Activated CD8-positive, alpha-beta memory T cell treated with anti-CD3 and anti-CD28 coated beads, Interleukin-2, amount 10 ng/mL, durations not matched to agents 7 days and 5 days (primary cell): ENCODE measurements at regions of chr17 and their contacts with region 1.

Region 1: GRCh38 chr17:38735161-38735997 is 5.2 kb downstream of the CISD3 start:
- DNase-seq: peak; percentile 77
- ATAC-seq: peak; percentile 18
- H3K4me3 Mint-ChIP-seq: no peak overlapping the region
- H3K27ac Mint-ChIP-seq: no peak overlapping the region
- H3K4me1 Mint-ChIP-seq: peaks cover 39% of the 10 kb centered on the region
- H3K27me3 Mint-ChIP-seq: no peaks in the 10 kb centered on the region

Region 2: GRCh38 chr17:38667099-38667786 is 68.1 kb before region 1 on chr17:
- CTCF ChIA-PET with region 1: interaction called, 232 read pairs
- DNase-seq: peak; percentile 77
- ATAC-seq: peak; percentile 76
- H3K4me3 Mint-ChIP-seq: no peak overlapping the region
- H3K27ac Mint-ChIP-seq: no peak overlapping the region
- H3K4me1 Mint-ChIP-seq: peaks cover 5% of the 10 kb centered on the region
- H3K27me3 Mint-ChIP-seq: peaks cover 61% of the 10 kb centered on the region

Region 3: GRCh38 chr17:38702166-38702899 is 33.0 kb before region 1 on chr17:
- CTCF ChIA-PET with region 1: interaction called, 29 read pairs
- DNase-seq: peak; percentile 89
- ATAC-seq: peak; percentile 54
- H3K4me3 Mint-ChIP-seq: peak overlapping the region; percentile 90
- H3K27ac Mint-ChIP-seq: peak overlapping the region; percentile 99
- H3K4me1 Mint-ChIP-seq: peaks cover 40% of the 10 kb centered on the region
- H3K27me3 Mint-ChIP-seq: no peaks in the 10 kb centered on the region

Region 4: GRCh38 chr17:38719289-38719942 is 16.0 kb before region 1 on chr17:
- CTCF ChIA-PET with region 1: interaction called, 17 read pairs
- DNase-seq: no peak
- ATAC-seq: no peak
- H3K4me3 Mint-ChIP-seq: no peak overlapping the region
- H3K27ac Mint-ChIP-seq: no peak overlapping the region
- H3K4me1 Mint-ChIP-seq: peaks cover 13% of the 10 kb centered on the region
- H3K27me3 Mint-ChIP-seq: no peaks in the 10 kb centered on the region

Region 5: DNA sequence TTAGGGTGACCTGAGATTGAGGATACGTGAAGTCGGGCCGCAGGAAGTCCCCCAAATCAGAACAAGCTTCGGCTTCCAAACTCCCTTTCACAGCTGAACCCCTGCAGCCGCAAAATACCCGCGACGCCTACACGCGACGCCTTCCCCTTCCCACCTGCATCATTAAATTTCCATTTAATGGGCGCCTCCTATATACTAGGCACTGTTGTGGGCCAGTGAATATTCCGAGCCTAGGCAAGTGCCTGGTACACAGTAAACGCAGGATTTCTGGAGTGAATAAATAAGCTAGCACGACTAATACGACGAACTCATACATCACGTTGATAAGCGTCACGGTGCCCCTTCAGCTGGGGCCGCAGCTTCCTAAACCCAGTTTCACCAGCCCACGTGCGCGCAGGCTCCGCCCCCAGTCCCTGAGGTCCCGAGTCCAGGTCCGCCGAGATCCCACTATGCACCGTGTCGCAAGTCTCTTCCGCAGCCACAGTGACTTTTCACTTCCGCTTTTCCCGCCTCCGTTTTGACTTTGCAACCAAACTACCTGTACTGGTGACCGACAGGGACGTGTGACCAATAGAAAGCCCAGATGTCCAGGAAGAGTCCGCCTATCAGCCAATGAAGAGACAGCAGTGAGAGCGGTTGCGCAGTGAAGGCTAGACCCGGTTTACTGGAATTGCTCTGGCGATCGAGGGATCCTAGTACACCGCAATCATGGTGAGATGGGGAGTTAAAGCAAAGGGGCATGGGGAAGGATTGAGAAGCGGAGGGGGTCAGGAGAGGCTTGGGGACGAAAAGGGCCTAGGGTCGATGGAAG is 16.9 kb after region 1 on chr17 and contains the start of gene PSMB3:
- CTCF ChIA-PET with region 1: interaction called, 28 read pairs
- DNase-seq: peak; percentile 99
- ATAC-seq: peak; percentile 89
- H3K4me3 Mint-ChIP-seq: peak within 1 kb of the TSS; percentile 91
- H3K27ac Mint-ChIP-seq: peak within 1 kb of the TSS; percentile 93
- H3K4me1 Mint-ChIP-seq: peaks cover 41% of the 10 kb centered on the region
- H3K27me3 Mint-ChIP-seq: peaks cover 32% of the 10 kb centered on the region
- total RNA-seq, gene PSMB3: 246 to 303 TPM

Region 6: GRCh38 chr17:38809828-38810227 is 74.4 kb after region 1 on chr17:
- CTCF ChIA-PET with region 1: no interaction called
- DNase-seq: no peak
- ATAC-seq: no peak
- H3K4me3 Mint-ChIP-seq: no peak overlapping the region
- H3K27ac Mint-ChIP-seq: no peak overlapping the region
- H3K4me1 Mint-ChIP-seq: no peaks in the 10 kb centered on the region
- H3K27me3 Mint-ChIP-seq: no peaks in the 10 kb centered on the region